Breast epithelium (tissue), 4 donors: ENCODE measurements at regions of chr2 and their contacts with region 1.

Region 1: GRCh38 chr2:183124222-183124956 is at the start of gene NUP35:
- DNase-seq: peak; percentile 76 to 78
- H3K4me3 ChIP-seq: peak within 1 kb of the TSS; percentile 86 to 94 (median 93)
- H3K27ac ChIP-seq: peak within 1 kb of the TSS; percentile 93
- H3K4me1 ChIP-seq: no peaks in the 10 kb centered on the region
- H3K27me3 ChIP-seq: no peaks in the 10 kb centered on the region
- CTCF ChIP-seq: no peak
- POLR2A ChIP-seq: no peak
- total RNA-seq, gene NUP35: 11.5 to 32.8 (median 29.5) TPM

Region 2: DNA sequence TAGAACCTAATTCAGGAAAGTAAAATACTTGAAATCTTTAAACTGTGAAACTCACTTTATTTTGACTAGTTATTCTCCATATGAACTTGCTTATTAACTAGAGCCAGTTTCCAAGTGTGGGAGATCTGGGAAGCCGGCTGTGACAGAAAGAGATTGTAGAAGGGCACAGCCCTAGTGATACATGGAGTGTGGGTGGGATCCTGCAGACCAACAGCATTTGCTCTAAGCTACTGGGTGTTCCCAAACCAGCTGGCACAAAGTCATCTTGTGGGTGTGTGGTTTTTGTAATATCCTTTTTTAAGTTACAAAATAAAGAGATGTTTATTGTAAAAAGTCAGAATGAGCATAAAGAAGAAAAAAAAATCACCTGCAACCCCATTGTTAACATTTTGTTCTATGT is 42.5 kb before region 1 on chr2:
- intact Hi-C with region 1: loop called (anchors 2 kb)
- DNase-seq: no peak
- H3K4me3 ChIP-seq: no peak overlapping the region
- H3K27ac ChIP-seq: no peak overlapping the region
- H3K4me1 ChIP-seq: no peaks in the 10 kb centered on the region
- H3K27me3 ChIP-seq: no peaks in the 10 kb centered on the region
- CTCF ChIP-seq: no peak
- POLR2A ChIP-seq: no peak

Region 3: GRCh38 chr2:183162362-183162761 is 38.0 kb after region 1 on chr2:
- intact Hi-C with region 1: no loop called
- DNase-seq: no peak
- H3K4me3 ChIP-seq: no peak overlapping the region
- H3K27ac ChIP-seq: no peak overlapping the region
- H3K4me1 ChIP-seq: no peaks in the 10 kb centered on the region
- H3K27me3 ChIP-seq: no peaks in the 10 kb centered on the region
- CTCF ChIP-seq: no peak
- POLR2A ChIP-seq: no peak